ENCODE measurements at regions of chr15 and their contacts with region 1.

Region 1: GRCh38 chr15:35293353-35294130 is 208.4 kb upstream of the NANOGP8 start:
- DNase-seq: no peak
- ATAC-seq: no peak
- H3K4me3 ChIP-seq: no peak overlapping the region
- H3K27ac ChIP-seq: no peak overlapping the region
- H3K4me1 ChIP-seq: no peaks in the 10 kb centered on the region
- H3K27me3 ChIP-seq: no peaks in the 10 kb centered on the region
- CTCF ChIP-seq: no peak

Region 2: GRCh38 chr15:35349916-35350315 is 56.4 kb after region 1 on chr15:
- intact Hi-C with region 1: no loop called
- DNase-seq: no peak
- ATAC-seq: no peak
- H3K4me3 ChIP-seq: no peak overlapping the region
- H3K27ac ChIP-seq: no peak overlapping the region
- H3K4me1 ChIP-seq: no peaks in the 10 kb centered on the region
- H3K27me3 ChIP-seq: no peaks in the 10 kb centered on the region
- CTCF ChIP-seq: no peak

Region 3: GRCh38 chr15:35444557-35445204 is 151.1 kb after region 1 on chr15:
- intact Hi-C with region 1: loop called in 1 of 2 experiments (anchors 5 kb)
- DNase-seq: peak in 2 of 4 donors; percentile 15 to 39
- ATAC-seq: peak; percentile 71
- H3K4me3 ChIP-seq: no peak overlapping the region
- H3K27ac ChIP-seq: no peak overlapping the region
- H3K4me1 ChIP-seq: no peaks in the 10 kb centered on the region
- H3K27me3 ChIP-seq: no peaks in the 10 kb centered on the region
- CTCF ChIP-seq: peak; percentile 60 to 84

Measured in left lung (tissue), 14 donors.